ENCODE measurements at regions of chr2 and their contacts with region 1.

Region 1: GRCh38 chr2:71068218-71069035 is at the start of gene NAGK:
- DNase-seq: peak; percentile 97 to 99 (median 99)
- ATAC-seq: peak; percentile 86
- H3K4me3 ChIP-seq: peak within 1 kb of the TSS; percentile 81
- H3K4me3 Mint-ChIP-seq: peak within 1 kb of the TSS; percentile 89 to 100 (median 98)
- H3K27ac ChIP-seq: peak within 1 kb of the TSS; percentile 96
- H3K27ac Mint-ChIP-seq: peak within 1 kb of the TSS; percentile 97 to 100 (median 99)
- H3K4me1 ChIP-seq: peaks cover 39 to 50% of the 10 kb centered on the region in 2 donors
- H3K4me1 Mint-ChIP-seq: peaks cover 40 to 68% (median 57%) of the 10 kb centered on the region in 7 donors
- H3K27me3 ChIP-seq: no peaks in the 10 kb centered on the region
- H3K27me3 Mint-ChIP-seq: peaks cover 0 to 7% (median 0%) of the 10 kb centered on the region in 5 donors
- total RNA-seq, gene NAGK: 92.4 to 169 (median 127) TPM

Region 2: DNA sequence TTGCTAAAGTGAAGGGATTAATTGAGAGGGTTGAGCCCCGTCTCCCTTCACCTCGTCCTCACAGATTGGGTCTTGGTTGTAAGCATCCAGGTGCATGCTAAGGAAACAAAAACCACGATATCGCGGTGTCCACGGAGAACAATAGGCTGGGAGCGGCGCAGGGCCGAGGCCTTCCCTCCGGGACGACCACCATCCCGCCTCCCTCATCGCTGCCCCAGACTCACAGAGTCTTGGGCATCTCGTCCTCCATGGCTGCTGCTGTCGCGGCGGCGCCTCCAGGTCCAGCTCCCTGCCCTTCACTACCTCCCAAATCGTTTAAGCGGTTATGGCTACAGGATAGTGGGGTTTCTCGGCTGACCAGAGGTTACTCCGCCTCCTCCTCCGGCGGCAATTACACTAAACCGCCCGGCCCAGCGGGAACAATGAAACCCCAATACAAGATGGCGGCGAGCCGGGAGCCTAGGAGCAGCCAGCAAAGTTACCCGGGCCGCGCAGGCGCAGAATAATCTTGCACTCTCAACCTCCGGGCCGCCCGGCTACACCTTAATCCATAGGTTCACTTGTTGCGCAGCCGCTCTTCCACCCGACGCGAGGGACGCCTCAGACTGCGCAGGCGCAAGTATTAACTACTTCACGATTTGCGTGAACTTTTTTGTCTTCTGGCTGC is 820.1 kb before region 1 on chr2 and contains the start of gene TIA1:
- CTCF ChIA-PET with region 1: no interaction called
- POLR2A ChIA-PET with region 1: no interaction called
- intact Hi-C with region 1: loop called in 1 of 2 experiments (anchors 1 kb)
- DNase-seq: peak; percentile 94 to 99 (median 98)
- ATAC-seq: peak; percentile 98
- H3K4me3 ChIP-seq: peak within 1 kb of the TSS; percentile 87
- H3K4me3 Mint-ChIP-seq: peak within 1 kb of the TSS; percentile 83 to 99 (median 95)
- H3K27ac ChIP-seq: peak within 1 kb of the TSS; percentile 95
- H3K27ac Mint-ChIP-seq: peak within 1 kb of the TSS; percentile 91 to 100 (median 97)
- H3K4me1 ChIP-seq: peaks cover 13 to 24% of the 10 kb centered on the region in 2 donors
- H3K4me1 Mint-ChIP-seq: peaks cover 23 to 48% (median 40%) of the 10 kb centered on the region in 7 donors
- H3K27me3 ChIP-seq: no peaks in the 10 kb centered on the region
- H3K27me3 Mint-ChIP-seq: peaks cover 0 to 4% (median 0%) of the 10 kb centered on the region in 5 donors
- total RNA-seq, gene TIA1: 80.9 to 244 (median 163) TPM

Region 3: DNA sequence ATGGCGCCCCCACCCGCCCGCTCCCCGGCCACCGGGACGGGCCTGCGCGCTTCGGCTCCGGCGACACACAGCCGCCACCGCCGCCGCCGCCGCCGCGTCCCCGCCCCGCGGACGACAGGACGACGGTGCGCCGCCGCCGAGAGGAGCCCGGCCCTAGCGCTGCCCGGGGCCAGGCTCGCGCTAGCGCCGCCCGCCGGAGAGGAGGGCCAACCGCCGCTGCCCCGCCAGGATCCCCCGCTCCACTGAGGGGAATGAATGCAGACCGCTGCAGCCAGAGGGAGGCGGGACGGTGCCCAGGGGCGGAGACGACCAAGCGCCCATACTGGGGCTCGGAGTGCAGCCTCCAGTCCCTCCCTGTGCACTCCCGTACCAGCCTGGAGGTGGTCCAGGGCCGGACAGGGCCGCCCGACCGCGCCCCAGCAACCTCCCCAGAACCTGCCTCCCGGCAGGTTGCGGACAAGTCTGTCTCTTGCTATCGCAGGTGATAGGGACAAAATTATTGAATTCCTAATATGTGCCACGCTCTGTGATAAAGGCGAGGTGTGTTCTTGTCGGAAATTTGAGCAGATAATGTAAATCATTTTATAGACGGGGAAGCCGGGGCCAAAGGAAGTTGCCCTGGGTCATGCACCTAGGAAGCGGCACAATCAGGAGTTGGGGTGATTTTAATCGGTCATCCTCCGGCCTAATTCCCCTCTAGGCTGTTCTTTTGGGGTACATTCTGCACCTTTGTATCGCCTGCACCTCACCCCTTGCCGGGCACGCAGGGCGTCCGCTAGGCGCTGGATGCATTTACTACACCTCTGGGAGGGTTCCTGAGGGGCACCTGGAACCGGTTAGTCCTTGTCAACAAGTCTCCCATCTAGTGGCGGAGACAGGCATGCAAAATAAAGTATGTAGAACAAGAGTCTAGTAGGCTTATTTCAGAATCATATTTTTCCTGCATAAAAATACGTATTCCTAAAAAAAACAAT is 73.4 kb before region 1 on chr2 and contains the start of gene TEX261:
- CTCF ChIA-PET with region 1: interaction called, 4 read pairs
- POLR2A ChIA-PET with region 1: interaction called, 10 read pairs
- intact Hi-C with region 1: loop called (anchors 1 to 2 kb)
- DNase-seq: peak; percentile 81 to 97 (median 88)
- ATAC-seq: peak; percentile 98
- H3K4me3 ChIP-seq: peak within 1 kb of the TSS; percentile 92
- H3K4me3 Mint-ChIP-seq: peak within 1 kb of the TSS; percentile 95 to 100 (median 98)
- H3K27ac ChIP-seq: peak within 1 kb of the TSS; percentile 88
- H3K27ac Mint-ChIP-seq: peak within 1 kb of the TSS; percentile 88 to 99 (median 96)
- H3K4me1 ChIP-seq: peaks cover 19 to 21% of the 10 kb centered on the region in 2 donors
- H3K4me1 Mint-ChIP-seq: peaks cover 23 to 44% (median 36%) of the 10 kb centered on the region in 7 donors
- H3K27me3 ChIP-seq: no peaks in the 10 kb centered on the region
- H3K27me3 Mint-ChIP-seq: no peaks in the 10 kb centered on the region
- total RNA-seq, gene TEX261: 33.2 to 66.3 (median 56.4) TPM

Region 4: GRCh38 chr2:71043531-71044407 is 24.7 kb before region 1 on chr2:
- CTCF ChIA-PET with region 1: no interaction called
- POLR2A ChIA-PET with region 1: no interaction called
- intact Hi-C with region 1: loop called in 1 of 2 experiments (anchors 2 kb)
- DNase-seq: peak in 1 of 9 donors; percentile 15
- ATAC-seq: no peak
- H3K4me3 ChIP-seq: no peak overlapping the region
- H3K4me3 Mint-ChIP-seq: no peak overlapping the region
- H3K27ac ChIP-seq: no peak overlapping the region
- H3K27ac Mint-ChIP-seq: no peak overlapping the region
- H3K4me1 ChIP-seq: no peaks in the 10 kb centered on the region
- H3K4me1 Mint-ChIP-seq: no peaks in the 10 kb centered on the region
- H3K27me3 ChIP-seq: no peaks in the 10 kb centered on the region
- H3K27me3 Mint-ChIP-seq: peaks cover 0 to 19% (median 9%) of the 10 kb centered on the region in 5 donors

Region 5: DNA sequence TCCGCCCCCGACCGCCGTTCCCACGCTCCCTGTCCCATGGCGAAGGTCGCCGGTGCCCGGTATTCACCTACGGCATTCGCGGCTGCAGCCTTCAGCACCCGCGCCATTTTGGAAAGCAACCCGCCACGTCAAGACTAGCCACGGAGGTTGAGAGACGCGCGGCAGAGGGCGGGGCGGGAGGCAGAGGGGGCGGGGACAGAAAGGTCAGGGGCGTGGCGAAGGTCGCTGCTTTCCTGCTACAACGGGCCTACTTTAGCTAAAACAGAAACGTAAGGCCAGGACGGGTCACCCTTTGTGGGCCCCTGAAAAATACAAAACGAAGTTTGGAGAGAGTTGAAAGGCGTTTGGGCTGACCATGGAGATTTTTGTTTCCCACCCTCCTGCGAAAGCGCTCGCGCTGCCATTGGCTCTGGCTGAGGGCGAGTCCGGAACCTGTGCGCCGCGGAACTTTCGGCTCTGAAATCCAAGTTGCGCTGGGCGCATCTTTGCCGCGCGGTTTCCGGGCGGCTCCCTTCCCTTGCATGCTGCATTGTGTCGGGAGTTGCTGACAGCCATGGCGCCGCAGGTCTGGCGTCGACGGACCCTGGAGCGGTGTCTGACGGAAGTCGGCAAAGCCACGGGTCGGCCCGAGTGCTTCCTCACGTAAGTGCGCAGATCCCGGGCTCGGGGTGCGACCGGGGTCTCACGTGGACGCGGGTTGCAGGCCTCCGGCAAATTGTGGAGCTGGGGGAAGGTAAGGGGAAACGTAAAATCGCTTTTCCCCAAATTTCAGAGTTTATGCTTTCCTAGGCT is 61.9 kb after region 1 on chr2 and contains the starts of genes MCEE and MPHOSPH10:
- CTCF ChIA-PET with region 1: interaction called, 5 read pairs
- POLR2A ChIA-PET with region 1: interaction called, 114 read pairs
- intact Hi-C with region 1: loop called (anchors 1 kb)
- DNase-seq: peak; percentile 81 to 91 (median 89)
- ATAC-seq: peak; percentile 95
- H3K4me3 ChIP-seq: peak within 1 kb of the TSS; percentile 74
- H3K4me3 Mint-ChIP-seq: no peak within 1 kb of the TSS
- H3K27ac ChIP-seq: peak within 1 kb of the TSS; percentile 87
- H3K27ac Mint-ChIP-seq: peak within 1 kb of the TSS in 1 of 9 donors; percentile 45
- H3K4me1 ChIP-seq: peaks cover 21 to 22% of the 10 kb centered on the region in 2 donors
- H3K4me1 Mint-ChIP-seq: peaks cover 5 to 33% (median 26%) of the 10 kb centered on the region in 7 donors
- H3K27me3 ChIP-seq: no peaks in the 10 kb centered on the region
- H3K27me3 Mint-ChIP-seq: no peaks in the 10 kb centered on the region
- total RNA-seq, gene MCEE: 11.6 to 27.9 (median 16.4) TPM
- total RNA-seq, gene MPHOSPH10: 28.2 to 58.9 (median 43.8) TPM

Region 6: GRCh38 chr2:71331581-71332434 is 263.4 kb after region 1 on chr2 and contains the start of gene ZNF638:
- CTCF ChIA-PET with region 1: no interaction called
- POLR2A ChIA-PET with region 1: interaction called, 21 read pairs
- intact Hi-C with region 1: loop called (anchors 1 kb)
- DNase-seq: peak; percentile 89 to 94 (median 93)
- ATAC-seq: peak; percentile 98
- H3K4me3 ChIP-seq: peak within 1 kb of the TSS; percentile 79
- H3K4me3 Mint-ChIP-seq: peak within 1 kb of the TSS; percentile 95 to 100 (median 99)
- H3K27ac ChIP-seq: peak within 1 kb of the TSS; percentile 99
- H3K27ac Mint-ChIP-seq: peak within 1 kb of the TSS; percentile 97 to 100 (median 100)
- H3K4me1 ChIP-seq: peaks cover 25 to 29% of the 10 kb centered on the region in 2 donors
- H3K4me1 Mint-ChIP-seq: peaks cover 19 to 56% (median 40%) of the 10 kb centered on the region in 7 donors
- H3K27me3 ChIP-seq: no peaks in the 10 kb centered on the region
- H3K27me3 Mint-ChIP-seq: peaks cover 0 to 20% (median 5%) of the 10 kb centered on the region in 5 donors
- total RNA-seq, gene ZNF638: 113 to 204 (median 121) TPM

Measured in naive thymus-derived CD4-positive, alpha-beta T cell (primary cell).